ENCODE measurements at regions of chr18 and their contacts with region 1.

Region 1: DNA sequence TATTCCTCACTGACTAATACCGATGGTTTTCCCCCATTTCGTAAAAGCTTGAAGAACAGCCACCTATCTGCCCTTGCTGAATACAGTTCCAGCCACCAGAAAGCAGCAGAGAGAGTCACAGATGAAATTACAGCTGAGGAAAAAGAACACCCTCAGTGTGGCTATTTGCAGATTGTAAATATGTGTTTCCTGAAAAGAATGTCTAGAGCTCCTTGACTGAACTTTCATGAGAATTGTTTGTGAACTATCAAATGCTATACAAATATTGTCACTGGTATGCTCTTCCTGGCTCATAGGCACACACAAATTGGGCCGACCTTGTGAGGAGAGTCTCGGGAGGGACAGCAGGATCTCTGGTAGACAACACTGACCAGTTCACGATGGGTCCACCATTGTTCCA is 58.1 kb upstream of the TTC39C start:
- DNase-seq: no peak
- H3K4me3 ChIP-seq: no peak overlapping the region
- H3K4me3 Mint-ChIP-seq: no peak overlapping the region
- H3K27ac ChIP-seq: no peak overlapping the region
- H3K27ac Mint-ChIP-seq: no peak overlapping the region
- H3K4me1 ChIP-seq: no peaks in the 10 kb centered on the region
- H3K4me1 Mint-ChIP-seq: peaks cover 0 to 6% (median 0%) of the 10 kb centered on the region in 3 donors
- H3K27me3 ChIP-seq: no peaks in the 10 kb centered on the region
- H3K27me3 Mint-ChIP-seq: peaks cover 0 to 6% of the 10 kb centered on the region in 2 donors

Region 2: DNA sequence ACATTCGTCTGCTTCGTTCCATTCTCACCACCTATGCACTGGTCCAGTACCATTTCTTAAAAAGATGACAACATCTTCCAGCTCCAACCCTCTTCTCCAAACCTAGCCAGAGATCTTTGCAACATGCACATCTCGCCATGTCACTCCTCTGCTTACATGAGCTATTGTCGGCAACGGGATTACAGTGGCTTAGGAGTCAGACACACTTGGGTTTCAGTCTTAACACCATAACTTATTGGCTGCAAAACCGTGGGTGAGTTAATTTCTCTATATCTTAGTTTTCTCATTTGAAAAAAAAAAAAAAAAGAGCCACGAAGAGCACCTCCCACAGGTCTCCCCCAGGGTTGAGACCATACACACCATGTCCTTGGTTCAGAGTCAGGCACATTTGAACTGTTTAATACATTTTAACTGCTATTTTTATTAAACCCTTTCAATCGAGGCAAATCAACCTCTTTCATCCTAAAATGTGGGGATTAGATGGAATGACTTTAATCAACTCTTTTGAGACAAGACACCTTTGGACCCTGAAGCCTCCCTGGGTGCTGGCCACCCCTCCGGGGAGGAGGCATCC is 294.7 kb before region 1 on chr18:
- CTCF ChIA-PET with region 1: no interaction called
- POLR2A ChIA-PET with region 1: interaction called, 14 read pairs
- DNase-seq: peak in 1 of 5 donors; percentile 0
- H3K4me3 ChIP-seq: peak overlapping the region; percentile 66
- H3K4me3 Mint-ChIP-seq: peak overlapping the region; percentile 78 to 93 (median 83)
- H3K27ac ChIP-seq: no peak overlapping the region
- H3K27ac Mint-ChIP-seq: peak overlapping the region in 5 of 8 donors; percentile 27 to 69 (median 38)
- H3K4me1 ChIP-seq: peaks cover 24% of the 10 kb centered on the region
- H3K4me1 Mint-ChIP-seq: peaks cover 22% of the 10 kb centered on the region in 3 donors
- H3K27me3 ChIP-seq: peaks cover 15% of the 10 kb centered on the region
- H3K27me3 Mint-ChIP-seq: peaks cover 30 to 31% of the 10 kb centered on the region in 2 donors

Region 3: DNA sequence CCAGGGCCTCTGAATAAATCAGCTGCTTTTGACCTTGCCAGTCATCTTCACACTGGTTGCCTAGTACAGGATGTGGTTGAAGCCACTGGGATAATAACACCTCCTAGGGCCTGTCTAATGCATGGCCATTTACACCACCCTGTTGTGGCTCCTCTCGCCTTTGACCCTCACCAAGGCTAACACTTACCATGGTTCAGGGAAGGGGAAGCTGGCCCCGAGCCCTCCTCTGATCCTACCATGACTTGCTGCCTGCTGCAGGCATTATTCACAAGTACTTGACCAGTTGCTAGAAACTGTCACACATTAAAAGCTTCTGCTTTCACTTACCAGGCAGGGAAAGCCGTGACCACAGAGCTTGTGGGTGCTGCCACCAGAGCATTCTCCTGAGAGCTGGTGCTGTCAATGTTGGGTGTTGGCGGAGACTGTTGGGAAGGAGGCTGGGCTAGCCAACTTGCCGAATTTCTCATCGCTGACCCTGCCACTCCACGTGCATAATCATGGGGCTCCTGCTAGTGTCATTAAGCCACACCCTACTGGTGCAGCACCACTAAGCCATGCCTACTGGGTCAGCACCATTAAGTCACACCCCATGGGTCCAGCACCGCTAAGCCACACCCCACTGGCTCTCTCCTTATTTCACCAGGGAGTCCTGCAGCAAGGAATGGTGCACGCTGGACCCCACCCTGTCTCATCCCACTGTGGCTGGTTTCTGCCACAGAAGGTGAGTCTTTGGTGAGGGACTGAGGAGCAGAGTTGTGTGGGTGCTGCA is 11.0 kb after region 1 on chr18:
- CTCF ChIA-PET with region 1: interaction called, 3 read pairs
- POLR2A ChIA-PET with region 1: interaction called, 12 read pairs
- DNase-seq: peak in 4 of 5 donors; percentile 13 to 66 (median 33)
- H3K4me3 ChIP-seq: no peak overlapping the region
- H3K4me3 Mint-ChIP-seq: peak overlapping the region in 6 of 7 donors; percentile 58 to 87 (median 68)
- H3K27ac ChIP-seq: no peak overlapping the region
- H3K27ac Mint-ChIP-seq: peak overlapping the region; percentile 66 to 98 (median 86)
- H3K4me1 ChIP-seq: peaks cover 80% of the 10 kb centered on the region
- H3K4me1 Mint-ChIP-seq: peaks cover 83 to 88% (median 86%) of the 10 kb centered on the region in 3 donors
- H3K27me3 ChIP-seq: no peaks in the 10 kb centered on the region
- H3K27me3 Mint-ChIP-seq: no peaks in the 10 kb centered on the region

Region 4: DNA sequence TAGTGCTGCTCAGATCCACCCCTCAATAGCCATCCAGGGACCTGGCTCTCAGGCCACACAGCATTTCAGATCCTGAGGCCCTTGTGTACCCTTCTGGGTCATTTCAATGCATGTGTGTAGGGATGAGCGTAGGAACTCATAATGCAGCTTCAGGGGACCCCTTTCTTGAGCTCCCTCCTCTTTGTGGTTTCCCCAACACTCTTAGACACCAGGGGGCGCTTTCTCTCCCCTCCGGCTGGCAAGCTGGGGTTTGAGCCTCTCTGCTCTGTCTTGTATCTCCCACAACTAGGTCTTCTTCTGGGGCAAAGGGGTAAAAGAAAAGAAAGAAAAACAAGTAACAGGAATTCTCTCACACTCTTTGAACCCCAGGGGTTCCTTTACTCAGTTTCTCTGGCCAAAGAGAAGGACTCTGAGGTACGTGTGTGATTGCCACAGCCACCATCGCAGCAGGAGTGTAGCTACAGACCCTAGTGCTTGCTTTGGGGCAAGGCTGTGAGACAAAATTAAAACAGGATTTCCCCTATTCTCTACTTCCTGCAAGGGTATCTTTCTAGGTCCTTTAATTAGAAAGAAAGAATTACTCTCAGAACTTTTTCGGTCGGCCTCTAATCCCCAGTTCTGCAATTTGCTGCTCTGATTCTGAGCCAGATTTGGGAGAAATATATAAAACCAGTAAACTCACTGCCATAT is 220.4 kb after region 1 on chr18:
- CTCF ChIA-PET with region 1: no interaction called
- POLR2A ChIA-PET with region 1: no interaction called
- DNase-seq: peak in 2 of 5 donors; percentile 3 to 7
- H3K4me3 ChIP-seq: no peak overlapping the region
- H3K4me3 Mint-ChIP-seq: no peak overlapping the region
- H3K27ac ChIP-seq: no peak overlapping the region
- H3K27ac Mint-ChIP-seq: no peak overlapping the region
- H3K4me1 ChIP-seq: no peaks in the 10 kb centered on the region
- H3K4me1 Mint-ChIP-seq: no peaks in the 10 kb centered on the region
- H3K27me3 ChIP-seq: no peaks in the 10 kb centered on the region
- H3K27me3 Mint-ChIP-seq: peaks cover 0 to 18% of the 10 kb centered on the region in 2 donors

Region 5: DNA sequence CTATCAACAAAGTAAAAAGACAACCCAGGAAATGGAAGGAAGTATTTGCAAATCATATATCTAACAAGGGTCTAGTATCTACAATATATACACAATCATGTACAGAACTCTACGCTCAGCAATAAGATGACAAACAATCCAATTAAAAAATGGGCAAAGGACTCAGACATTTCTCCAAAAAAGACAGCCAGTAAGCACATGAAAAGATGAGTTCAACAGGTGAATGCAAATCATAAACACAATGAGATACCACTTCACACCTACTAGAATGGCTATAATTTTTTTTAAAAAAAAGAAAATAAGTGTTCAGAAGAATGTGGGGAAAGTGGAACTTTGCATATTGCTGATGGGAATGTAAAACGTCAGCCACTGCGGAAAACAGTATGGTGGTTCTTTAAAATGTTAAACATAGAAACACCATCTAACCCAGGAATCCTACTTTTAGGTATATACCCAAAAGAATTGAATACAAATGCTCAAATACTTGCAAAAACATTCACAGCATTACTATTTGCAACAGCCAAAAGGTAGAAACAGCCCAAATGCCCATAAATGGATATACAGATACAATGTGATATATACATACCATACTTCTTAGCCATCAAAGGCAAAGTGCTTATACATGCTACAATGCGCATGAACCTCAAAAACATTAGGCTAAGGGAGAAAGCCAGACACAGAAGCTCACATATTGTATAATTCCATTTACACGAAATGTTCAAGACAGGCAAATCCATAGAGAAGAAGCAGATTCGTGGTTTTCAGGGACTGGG is 303.6 kb after region 1 on chr18:
- CTCF ChIA-PET with region 1: no interaction called
- POLR2A ChIA-PET with region 1: no interaction called
- DNase-seq: no peak
- H3K4me3 ChIP-seq: no peak overlapping the region
- H3K4me3 Mint-ChIP-seq: no peak overlapping the region
- H3K27ac ChIP-seq: no peak overlapping the region
- H3K27ac Mint-ChIP-seq: no peak overlapping the region
- H3K4me1 ChIP-seq: no peaks in the 10 kb centered on the region
- H3K4me1 Mint-ChIP-seq: no peaks in the 10 kb centered on the region
- H3K27me3 ChIP-seq: no peaks in the 10 kb centered on the region
- H3K27me3 Mint-ChIP-seq: peaks cover 9 to 27% of the 10 kb centered on the region in 2 donors